Cardiac septum (tissue), 1 donor: ENCODE measurements at regions of chr2 and their contacts with region 1.

Region 1: DNA sequence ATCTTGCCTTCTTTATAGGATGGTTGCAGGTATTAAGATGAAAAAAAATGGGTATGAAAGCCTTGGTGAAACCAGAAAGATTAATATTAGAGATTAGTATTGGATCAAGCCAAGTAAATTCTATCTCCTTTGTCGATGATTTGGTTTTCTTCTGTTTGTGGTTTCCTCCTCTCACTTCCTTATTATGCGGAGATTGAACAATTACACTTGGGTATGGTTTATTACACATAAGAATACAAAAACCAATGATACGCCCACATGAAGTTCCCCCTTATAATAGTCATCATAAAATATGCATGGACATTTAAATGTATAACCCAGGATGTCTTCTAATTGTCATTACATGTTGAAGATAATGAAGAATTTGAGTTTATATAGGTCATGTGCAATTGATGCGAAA is 4.9 kb downstream of the LTBP1 start:
- DNase-seq: no peak

Region 2: GRCh38 chr2:33015421-33016142 is 63.9 kb after region 1 on chr2:
- intact Hi-C with region 1: no loop called
- DNase-seq: no peak

Region 3: DNA sequence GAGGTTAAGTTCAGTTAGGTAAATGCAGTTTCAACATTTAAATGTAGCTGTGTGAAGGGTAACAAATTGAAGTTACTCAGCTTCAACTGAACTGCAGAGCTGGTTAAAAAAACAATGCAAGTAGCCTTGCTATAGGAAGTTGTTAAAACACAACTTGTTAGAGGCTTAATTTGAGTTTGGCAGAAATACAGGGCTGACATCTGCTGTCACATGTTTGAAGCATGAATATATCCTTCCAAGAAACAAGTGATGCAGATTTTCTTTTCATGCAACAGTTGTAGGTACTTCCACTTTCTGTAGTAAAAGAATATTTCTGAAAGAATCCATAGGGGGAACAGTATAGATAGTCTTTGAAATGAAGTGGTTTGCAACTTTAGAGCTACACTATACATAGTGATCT is 316.1 kb after region 1 on chr2:
- intact Hi-C with region 1: loop called (anchors 5 kb)
- DNase-seq: no peak